Caco-2 (cell line): ENCODE measurements at regions of chr18 and their contacts with region 1.

Region 1: GRCh38 chr18:9965711-9966624 is 52.2 kb downstream of the VAPA start:
- DNase-seq: no peak
- H3K4me3 ChIP-seq: no peak overlapping the region
- H3K4me3 Mint-ChIP-seq: no peak overlapping the region
- H3K27ac Mint-ChIP-seq: no peak overlapping the region
- H3K4me1 ChIP-seq: peaks cover 10% of the 10 kb centered on the region
- H3K4me1 Mint-ChIP-seq: peaks cover 11% of the 10 kb centered on the region
- H3K27me3 ChIP-seq: no peaks in the 10 kb centered on the region
- H3K27me3 Mint-ChIP-seq: no peaks in the 10 kb centered on the region
- CTCF ChIP-seq: no peak

Region 2: DNA sequence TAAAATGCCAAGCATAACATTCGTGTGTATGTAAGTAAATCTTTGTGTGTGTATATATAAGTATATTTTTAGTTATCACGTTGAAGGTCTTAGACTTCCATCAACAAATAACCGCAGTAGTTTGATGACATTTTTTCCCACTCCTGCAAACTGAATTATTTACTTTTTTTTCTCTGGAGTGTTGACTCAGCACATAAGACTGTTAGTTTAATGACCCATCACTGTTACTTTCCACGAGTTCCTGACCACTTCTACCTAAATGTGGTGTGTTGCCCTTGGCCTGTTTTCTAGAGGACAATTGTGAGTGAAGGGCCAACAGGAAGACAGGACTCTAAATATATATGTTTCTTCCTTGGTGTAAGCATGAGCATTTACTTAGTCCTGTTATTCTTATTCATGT is 151.5 kb before region 1 on chr18:
- CTCF ChIA-PET with region 1: no interaction called
- POLR2A ChIA-PET with region 1: no interaction called
- intact Hi-C with region 1: loop called (anchors 5 kb)
- DNase-seq: no peak
- H3K4me3 ChIP-seq: no peak overlapping the region
- H3K4me3 Mint-ChIP-seq: no peak overlapping the region
- H3K27ac Mint-ChIP-seq: no peak overlapping the region
- H3K4me1 ChIP-seq: peaks cover 13% of the 10 kb centered on the region
- H3K4me1 Mint-ChIP-seq: no peaks in the 10 kb centered on the region
- H3K27me3 ChIP-seq: no peaks in the 10 kb centered on the region
- H3K27me3 Mint-ChIP-seq: no peaks in the 10 kb centered on the region
- CTCF ChIP-seq: no peak

Region 3: GRCh38 chr18:9987345-9987744 is 21.4 kb after region 1 on chr18:
- CTCF ChIA-PET with region 1: no interaction called
- POLR2A ChIA-PET with region 1: no interaction called
- intact Hi-C with region 1: no loop called
- DNase-seq: no peak
- H3K4me3 ChIP-seq: no peak overlapping the region
- H3K4me3 Mint-ChIP-seq: no peak overlapping the region
- H3K27ac Mint-ChIP-seq: no peak overlapping the region
- H3K4me1 ChIP-seq: no peaks in the 10 kb centered on the region
- H3K4me1 Mint-ChIP-seq: peaks cover 6% of the 10 kb centered on the region
- H3K27me3 ChIP-seq: no peaks in the 10 kb centered on the region
- H3K27me3 Mint-ChIP-seq: no peaks in the 10 kb centered on the region
- CTCF ChIP-seq: no peak

Region 4: DNA sequence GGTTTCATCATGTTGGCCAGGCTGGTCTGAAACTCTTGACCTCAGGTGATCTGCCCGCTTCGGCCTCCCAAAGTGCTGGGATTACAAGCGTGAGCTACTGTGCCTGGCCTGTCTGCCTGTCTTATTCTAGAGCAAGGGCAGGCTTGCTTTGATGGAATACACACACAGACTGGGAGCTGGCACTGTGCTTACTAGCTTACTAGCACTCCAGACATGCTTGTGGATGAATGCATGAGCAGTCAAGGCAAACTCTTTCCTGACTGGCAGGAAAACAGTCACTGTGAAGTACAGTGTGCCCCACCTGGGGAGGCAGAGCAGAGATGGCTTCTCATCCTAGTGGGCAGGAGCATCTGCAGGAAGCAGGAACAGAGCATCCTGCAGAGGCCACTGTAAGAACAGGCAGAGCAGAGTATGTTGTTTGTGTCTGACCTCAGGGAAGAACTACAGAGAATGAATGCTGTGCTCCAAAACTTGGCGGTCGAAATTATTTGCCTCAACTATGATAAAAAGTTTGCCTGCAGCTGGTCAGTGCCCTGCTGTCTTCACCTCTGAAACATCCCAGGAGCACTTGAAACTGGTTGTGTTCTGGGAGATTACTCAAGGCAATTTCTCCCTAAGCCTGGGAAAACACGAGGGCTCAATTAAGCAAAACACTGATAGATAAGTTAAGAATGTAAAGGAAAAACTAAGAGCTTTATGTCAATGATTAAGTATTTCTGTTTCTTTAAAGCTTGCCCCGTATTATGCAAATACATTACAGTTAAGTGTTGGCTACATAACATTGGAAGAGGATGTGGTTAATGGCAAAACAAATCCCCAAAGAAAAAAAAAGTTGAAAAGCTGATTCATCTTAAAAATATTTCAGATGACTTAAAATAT is 50.2 kb after region 1 on chr18:
- CTCF ChIA-PET with region 1: no interaction called
- POLR2A ChIA-PET with region 1: no interaction called
- intact Hi-C with region 1: loop called (anchors 5 kb)
- DNase-seq: peak; percentile 13 to 29
- H3K4me3 ChIP-seq: no peak overlapping the region
- H3K4me3 Mint-ChIP-seq: no peak overlapping the region
- H3K27ac Mint-ChIP-seq: no peak overlapping the region
- H3K4me1 ChIP-seq: peaks cover 26% of the 10 kb centered on the region
- H3K4me1 Mint-ChIP-seq: peaks cover 43% of the 10 kb centered on the region
- H3K27me3 ChIP-seq: no peaks in the 10 kb centered on the region
- H3K27me3 Mint-ChIP-seq: no peaks in the 10 kb centered on the region
- CTCF ChIP-seq: peak in 1 of 2 experiments; percentile 24